ENCODE measurements at regions of chr1 and their contacts with region 1.

Region 1: DNA sequence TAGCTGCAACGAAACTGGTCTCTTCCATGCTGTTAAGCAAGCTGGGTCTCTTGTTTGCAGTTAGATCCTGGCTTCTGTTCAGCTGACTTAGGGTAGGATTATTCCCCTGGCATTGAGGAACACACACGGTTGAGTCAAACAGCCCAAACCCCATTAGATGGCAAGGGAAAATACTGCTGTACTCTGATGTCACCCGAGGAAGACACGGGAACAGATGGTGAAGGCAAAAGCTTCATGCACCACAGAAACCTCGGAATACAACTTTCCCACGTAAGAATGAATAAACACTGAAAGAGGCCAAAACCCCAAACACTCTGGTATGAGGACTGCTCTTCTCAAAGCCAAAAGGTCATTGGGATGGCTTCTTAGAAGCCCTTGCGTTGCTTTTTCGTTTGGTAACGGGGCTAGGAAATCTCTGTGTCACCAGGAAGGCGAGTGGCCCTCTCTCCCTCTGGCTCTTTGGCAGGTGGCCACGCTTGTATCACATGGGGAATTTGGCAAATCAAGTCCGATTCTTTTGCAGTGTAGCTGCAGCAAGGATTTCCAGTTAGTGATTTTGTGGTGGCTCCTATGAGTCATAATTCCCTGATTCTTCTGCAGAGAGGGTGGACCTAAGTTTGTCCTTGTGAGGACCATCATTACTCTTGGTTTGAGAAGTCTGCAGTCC is 16.7 kb upstream of the LYST start:
- DNase-seq: peak in 1 of 2 donors; percentile 95
- H3K4me3 ChIP-seq: peak overlapping the region; percentile 25 to 29
- H3K27ac ChIP-seq: peak overlapping the region; percentile 77
- H3K4me1 ChIP-seq: peaks cover 37% of the 10 kb centered on the region
- H3K27me3 ChIP-seq: no peaks in the 10 kb centered on the region
- CTCF ChIP-seq: no peak
- POLR2A ChIP-seq: no peak

Region 2: DNA sequence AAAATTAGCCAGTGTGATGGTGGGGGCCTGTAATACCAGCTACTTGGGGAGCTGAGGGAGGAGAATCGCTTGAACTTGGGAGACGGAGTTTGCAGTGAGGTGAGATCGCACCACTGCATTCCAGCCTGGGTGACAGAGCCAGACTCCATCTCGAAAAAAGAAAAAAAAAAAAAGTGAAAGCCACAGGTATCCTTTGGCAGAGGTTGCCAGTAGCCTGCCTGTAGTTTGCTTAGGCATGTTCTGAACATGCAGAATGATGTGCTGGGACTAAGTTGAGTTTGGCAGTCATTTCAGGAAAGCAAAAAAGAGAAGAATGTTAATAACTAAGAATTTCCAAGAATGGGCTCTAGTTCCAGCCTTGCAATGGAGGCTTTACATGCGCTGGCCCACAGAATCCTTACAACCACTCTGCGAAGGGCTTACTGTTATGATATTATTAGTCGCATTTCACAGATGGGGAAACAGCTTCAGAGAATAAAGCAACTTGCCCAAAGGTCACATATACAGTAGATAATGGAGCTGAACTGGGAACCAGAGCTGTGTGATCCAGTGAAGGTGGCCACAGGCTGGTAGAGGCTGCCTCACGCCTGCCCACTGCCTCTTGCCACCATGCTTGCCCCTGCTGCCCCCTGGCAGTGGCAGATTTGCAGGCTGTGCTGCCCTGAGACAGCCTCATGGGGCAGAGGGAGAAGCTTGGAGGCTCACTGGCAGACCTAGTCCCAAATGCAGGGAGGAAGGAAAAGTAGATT is 49.8 kb after region 1 on chr1:
- intact Hi-C with region 1: no loop called
- DNase-seq: no peak
- H3K4me3 ChIP-seq: no peak overlapping the region
- H3K27ac ChIP-seq: no peak overlapping the region
- H3K4me1 ChIP-seq: peaks cover 35% of the 10 kb centered on the region
- H3K27me3 ChIP-seq: no peaks in the 10 kb centered on the region
- CTCF ChIP-seq: no peak
- POLR2A ChIP-seq: no peak

Region 3: GRCh38 chr1:235960809-235961208 is 77.4 kb after region 1 on chr1:
- intact Hi-C with region 1: loop called (anchors 10 kb)
- DNase-seq: no peak
- H3K4me3 ChIP-seq: no peak overlapping the region
- H3K27ac ChIP-seq: no peak overlapping the region
- H3K4me1 ChIP-seq: no peaks in the 10 kb centered on the region
- H3K27me3 ChIP-seq: no peaks in the 10 kb centered on the region
- CTCF ChIP-seq: no peak
- POLR2A ChIP-seq: no peak

Measured in vagina (tissue), 2 donors.